Activated naive CD4-positive, alpha-beta T cell treated with anti-CD3 and anti-CD28 coated beads for 36 hours (primary cell): ENCODE measurements at regions of chr14 and their contacts with region 1.

Region 1: DNA sequence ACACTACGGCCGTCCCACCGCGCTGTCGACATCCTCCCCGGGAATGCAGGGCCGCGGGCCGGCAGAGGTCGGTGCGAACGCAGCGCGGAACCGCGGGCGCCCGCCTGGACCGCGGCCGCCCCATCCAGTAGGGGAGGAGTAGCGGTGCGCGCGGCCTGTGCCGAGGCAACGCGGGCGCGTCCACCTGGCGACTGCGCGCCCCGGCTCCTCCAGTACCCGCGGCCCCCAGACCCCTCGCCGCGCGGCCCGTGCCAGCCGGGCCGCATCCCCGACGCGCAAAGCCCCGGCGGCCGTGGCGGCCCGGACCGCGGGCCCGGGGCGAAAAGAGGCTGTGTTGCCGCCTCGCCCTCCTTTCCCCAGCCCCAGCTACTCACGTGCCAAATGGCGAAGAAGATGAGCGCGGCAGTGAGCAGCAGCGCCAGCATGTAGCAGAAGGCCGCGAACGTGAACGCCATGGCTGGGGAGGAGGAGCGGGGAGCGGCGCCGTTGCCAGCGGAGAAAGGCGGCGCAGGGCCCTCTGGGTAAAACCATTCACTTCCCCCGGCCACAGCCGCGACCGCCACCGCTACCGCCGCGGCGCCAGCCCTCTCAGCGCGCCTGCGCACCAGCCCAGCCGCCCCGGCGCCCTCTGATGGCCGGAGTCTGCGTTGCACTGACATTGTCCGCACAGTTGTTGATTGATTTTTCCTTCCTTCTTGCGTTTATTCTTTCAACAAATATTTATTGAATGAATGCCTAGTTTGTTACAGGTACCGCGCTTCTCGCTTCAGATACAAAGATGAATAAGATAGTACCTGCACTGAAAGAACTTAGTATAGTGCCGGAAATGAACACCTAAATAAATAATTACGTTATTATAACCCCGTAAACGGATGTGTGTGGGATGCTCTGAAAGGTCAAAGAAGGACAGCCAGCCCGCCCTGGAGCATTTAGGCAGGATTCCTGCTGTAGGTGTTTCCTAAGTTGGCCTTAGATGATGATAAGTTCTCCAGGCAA is at the start of gene CNIH1:
- DNase-seq: peak; percentile 93
- H3K4me3 Mint-ChIP-seq: peak within 1 kb of the TSS; percentile 87
- H3K27ac Mint-ChIP-seq: peak within 1 kb of the TSS; percentile 97
- H3K4me1 Mint-ChIP-seq: peaks cover 48% of the 10 kb centered on the region
- H3K27me3 Mint-ChIP-seq: no peaks in the 10 kb centered on the region
- total RNA-seq, gene CNIH1: 68.1 to 78.4 TPM

Region 2: GRCh38 chr14:54366736-54367735 is 74.1 kb before region 1 on chr14:
- CTCF ChIA-PET with region 1: no interaction called
- intact Hi-C with region 1: loop called (anchors 1 kb)
- DNase-seq: peak; percentile 53
- H3K4me3 Mint-ChIP-seq: no peak overlapping the region
- H3K27ac Mint-ChIP-seq: no peak overlapping the region
- H3K4me1 Mint-ChIP-seq: no peaks in the 10 kb centered on the region
- H3K27me3 Mint-ChIP-seq: peaks cover 3% of the 10 kb centered on the region

Region 3: DNA sequence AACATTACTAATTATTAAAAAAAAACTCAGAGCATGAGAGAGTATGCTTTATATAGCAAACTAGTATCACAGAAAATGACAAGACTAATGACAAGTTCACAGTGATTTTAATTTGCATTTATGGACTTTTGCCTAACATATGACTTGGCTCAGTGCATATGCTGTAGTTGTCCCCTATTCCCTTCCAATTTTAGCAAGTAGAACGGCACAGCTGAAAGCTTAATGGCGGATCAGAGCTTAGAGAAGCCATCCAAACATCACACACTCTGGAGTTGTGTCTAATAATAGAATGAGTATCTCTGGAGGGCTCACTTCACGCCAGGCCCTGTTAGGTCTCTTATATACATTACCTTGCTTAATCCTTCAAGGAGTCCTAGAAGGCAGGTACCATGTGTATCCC is 13.3 kb before region 1 on chr14:
- CTCF ChIA-PET with region 1: interaction called, 4 read pairs
- intact Hi-C with region 1: loop called (anchors 1 kb)
- DNase-seq: no peak
- H3K4me3 Mint-ChIP-seq: no peak overlapping the region
- H3K27ac Mint-ChIP-seq: no peak overlapping the region
- H3K4me1 Mint-ChIP-seq: peaks cover 45% of the 10 kb centered on the region
- H3K27me3 Mint-ChIP-seq: no peaks in the 10 kb centered on the region

Region 4: GRCh38 chr14:54488646-54489317 is 47.6 kb after region 1 on chr14 and contains the start of gene GMFB:
- CTCF ChIA-PET with region 1: no interaction called
- intact Hi-C with region 1: loop called (anchors 1 kb)
- DNase-seq: peak; percentile 91
- H3K4me3 Mint-ChIP-seq: peak within 1 kb of the TSS; percentile 85
- H3K27ac Mint-ChIP-seq: peak within 1 kb of the TSS; percentile 88
- H3K4me1 Mint-ChIP-seq: peaks cover 54% of the 10 kb centered on the region
- H3K27me3 Mint-ChIP-seq: no peaks in the 10 kb centered on the region
- total RNA-seq, gene GMFB: 29.5 to 33.4 TPM

Region 5: GRCh38 chr14:54509546-54510501 is 68.7 kb after region 1 on chr14 and contains the start of gene CGRRF1:
- CTCF ChIA-PET with region 1: no interaction called
- intact Hi-C with region 1: loop called (anchors 1 kb)
- DNase-seq: peak; percentile 98
- H3K4me3 Mint-ChIP-seq: peak within 1 kb of the TSS; percentile 86
- H3K27ac Mint-ChIP-seq: peak within 1 kb of the TSS; percentile 52
- H3K4me1 Mint-ChIP-seq: peaks cover 41% of the 10 kb centered on the region
- H3K27me3 Mint-ChIP-seq: no peaks in the 10 kb centered on the region
- total RNA-seq, gene CGRRF1: 9.2 to 9.7 TPM

Region 6: GRCh38 chr14:54867011-54867410 is 425.8 kb after region 1 on chr14:
- CTCF ChIA-PET with region 1: no interaction called
- intact Hi-C with region 1: no loop called
- DNase-seq: no peak
- H3K4me3 Mint-ChIP-seq: no peak overlapping the region
- H3K27ac Mint-ChIP-seq: no peak overlapping the region
- H3K4me1 Mint-ChIP-seq: peaks cover 19% of the 10 kb centered on the region
- H3K27me3 Mint-ChIP-seq: no peaks in the 10 kb centered on the region